ENCODE measurements at regions of chr18 and their contacts with region 1.

Region 1: GRCh38 chr18:72762515-72763122 is 105.2 kb downstream of the NETO1 start:
- DNase-seq: no peak
- ATAC-seq: no peak
- H3K4me3 ChIP-seq: no peak overlapping the region
- H3K27ac ChIP-seq: no peak overlapping the region
- H3K4me1 ChIP-seq: no peaks in the 10 kb centered on the region
- H3K27me3 ChIP-seq: no peaks in the 10 kb centered on the region
- CTCF ChIP-seq: peak; percentile 63 to 85 (median 76)
- POLR2A ChIP-seq: no peak

Region 2: DNA sequence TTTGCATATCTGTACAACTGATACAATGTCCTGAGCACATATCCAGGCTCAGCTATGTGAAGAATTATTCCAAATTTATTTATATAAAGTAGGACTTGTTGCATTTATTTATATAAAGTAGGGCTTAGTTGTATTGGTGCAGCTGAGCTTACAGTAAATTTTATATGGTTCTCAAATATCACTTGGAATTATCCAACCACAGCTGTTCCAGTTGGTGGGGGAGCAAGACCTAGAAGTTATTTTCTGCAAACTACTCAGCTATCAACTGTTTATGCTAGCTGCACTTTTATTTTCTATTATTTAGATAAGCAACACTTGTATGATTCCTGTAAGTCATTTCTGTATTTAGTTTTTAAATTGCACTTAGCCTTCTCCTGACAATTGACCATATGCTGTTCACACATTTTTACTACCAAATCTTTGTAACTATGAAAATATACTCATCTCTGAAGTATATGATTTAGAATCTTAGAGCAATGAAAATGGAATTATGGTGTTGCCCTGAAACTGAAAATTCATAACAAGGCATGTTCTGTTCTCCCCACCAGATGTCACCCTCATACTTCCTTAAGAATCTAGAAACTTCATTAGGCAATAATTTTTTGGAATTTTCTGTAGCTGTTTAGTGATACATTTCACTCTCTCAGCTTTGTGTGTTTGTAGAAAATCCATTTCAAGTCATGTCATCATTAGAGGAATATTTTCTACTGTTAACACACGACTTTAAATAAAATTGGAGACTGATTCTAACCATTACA is 61.5 kb before region 1 on chr18:
- intact Hi-C with region 1: no loop called
- DNase-seq: no peak
- ATAC-seq: no peak
- H3K4me3 ChIP-seq: no peak overlapping the region
- H3K27ac ChIP-seq: no peak overlapping the region
- H3K4me1 ChIP-seq: no peaks in the 10 kb centered on the region
- H3K27me3 ChIP-seq: no peaks in the 10 kb centered on the region
- CTCF ChIP-seq: peak in 11 of 12 donors; percentile 6 to 53 (median 28)
- POLR2A ChIP-seq: no peak

Region 3: GRCh38 chr18:72908181-72908580 is 145.6 kb after region 1 on chr18:
- intact Hi-C with region 1: no loop called
- DNase-seq: no peak
- ATAC-seq: no peak
- H3K4me3 ChIP-seq: no peak overlapping the region
- H3K27ac ChIP-seq: no peak overlapping the region
- H3K4me1 ChIP-seq: no peaks in the 10 kb centered on the region
- H3K27me3 ChIP-seq: no peaks in the 10 kb centered on the region
- CTCF ChIP-seq: no peak
- POLR2A ChIP-seq: no peak

Region 4: DNA sequence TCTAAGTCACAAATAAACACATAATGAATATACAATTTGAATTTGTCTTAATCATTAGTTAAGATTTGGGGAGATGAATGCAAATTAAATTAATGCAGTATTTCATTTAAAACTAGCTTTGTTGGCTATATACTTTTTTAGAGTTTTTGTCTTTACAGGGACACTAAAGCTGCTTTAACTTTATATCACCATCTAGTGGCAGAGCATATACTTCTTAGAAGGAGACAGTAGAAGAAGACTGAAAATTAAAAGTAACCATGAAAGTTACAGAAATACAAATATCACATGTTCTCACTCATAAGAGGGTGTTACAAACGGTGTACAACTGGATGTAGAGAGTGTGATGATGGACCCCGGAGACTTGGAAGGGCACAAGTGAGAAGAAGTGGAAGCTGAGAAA is 373.5 kb after region 1 on chr18:
- intact Hi-C with region 1: loop called in 8 of 10 experiments (anchors 2 to 10 kb)
- DNase-seq: no peak
- ATAC-seq: no peak
- H3K4me3 ChIP-seq: no peak overlapping the region
- H3K27ac ChIP-seq: no peak overlapping the region
- H3K4me1 ChIP-seq: no peaks in the 10 kb centered on the region
- H3K27me3 ChIP-seq: no peaks in the 10 kb centered on the region
- CTCF ChIP-seq: peak in 9 of 12 donors; percentile 16 to 48 (median 34)
- POLR2A ChIP-seq: no peak

Region 5: GRCh38 chr18:73842795-73843394 is 1080.3 kb after region 1 on chr18:
- intact Hi-C with region 1: loop called (anchors 2 to 10 kb)
- DNase-seq: peak in 3 of 5 donors; percentile 21 to 43 (median 41)
- ATAC-seq: peak in 2 of 4 donors; percentile 45 to 66
- H3K4me3 ChIP-seq: peak overlapping the region in 4 of 12 donors; percentile 5 to 25 (median 14)
- H3K27ac ChIP-seq: no peak overlapping the region
- H3K4me1 ChIP-seq: peaks cover 0 to 4% (median 0%) of the 10 kb centered on the region in 12 donors
- H3K27me3 ChIP-seq: peaks cover 0 to 9% (median 0%) of the 10 kb centered on the region in 9 donors
- CTCF ChIP-seq: peak; percentile 82 to 98 (median 94)
- POLR2A ChIP-seq: no peak

Region 6: GRCh38 chr18:74116633-74117554 is 1354.3 kb after region 1 on chr18:
- intact Hi-C with region 1: loop called (anchors 2 to 10 kb)
- DNase-seq: no peak
- ATAC-seq: peak in 2 of 4 donors; percentile 29 to 36
- H3K4me3 ChIP-seq: no peak overlapping the region
- H3K27ac ChIP-seq: no peak overlapping the region
- H3K4me1 ChIP-seq: peaks cover 0 to 6% (median 0%) of the 10 kb centered on the region in 12 donors
- H3K27me3 ChIP-seq: peaks cover 0 to 5% (median 0%) of the 10 kb centered on the region in 9 donors
- CTCF ChIP-seq: peak; percentile 41 to 68 (median 54)
- POLR2A ChIP-seq: no peak

Region 7: DNA sequence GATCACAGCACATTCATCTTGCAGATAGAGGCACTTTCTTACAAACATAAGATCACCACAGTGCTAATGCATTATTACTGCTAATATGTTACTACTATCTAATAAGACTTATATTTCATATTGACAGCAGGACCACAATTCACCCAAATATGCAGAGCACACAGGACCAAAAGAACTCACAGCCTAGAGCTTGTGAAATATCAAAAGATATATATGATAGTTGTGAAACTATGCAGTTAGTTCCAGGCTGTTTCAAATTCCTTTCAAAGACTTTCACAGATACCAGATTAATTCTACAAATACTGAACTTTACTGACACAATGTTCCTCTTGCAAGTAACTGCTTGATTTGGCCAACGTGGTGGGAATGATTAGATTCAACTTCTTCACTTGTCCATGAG is 1362.0 kb after region 1 on chr18:
- intact Hi-C with region 1: loop called in 9 of 10 experiments (anchors 5 to 10 kb)
- DNase-seq: no peak
- ATAC-seq: no peak
- H3K4me3 ChIP-seq: no peak overlapping the region
- H3K27ac ChIP-seq: no peak overlapping the region
- H3K4me1 ChIP-seq: peaks cover 0 to 8% (median 0%) of the 10 kb centered on the region in 12 donors
- H3K27me3 ChIP-seq: peaks cover 0 to 2% (median 0%) of the 10 kb centered on the region in 9 donors
- CTCF ChIP-seq: no peak
- POLR2A ChIP-seq: no peak

Region 8: DNA sequence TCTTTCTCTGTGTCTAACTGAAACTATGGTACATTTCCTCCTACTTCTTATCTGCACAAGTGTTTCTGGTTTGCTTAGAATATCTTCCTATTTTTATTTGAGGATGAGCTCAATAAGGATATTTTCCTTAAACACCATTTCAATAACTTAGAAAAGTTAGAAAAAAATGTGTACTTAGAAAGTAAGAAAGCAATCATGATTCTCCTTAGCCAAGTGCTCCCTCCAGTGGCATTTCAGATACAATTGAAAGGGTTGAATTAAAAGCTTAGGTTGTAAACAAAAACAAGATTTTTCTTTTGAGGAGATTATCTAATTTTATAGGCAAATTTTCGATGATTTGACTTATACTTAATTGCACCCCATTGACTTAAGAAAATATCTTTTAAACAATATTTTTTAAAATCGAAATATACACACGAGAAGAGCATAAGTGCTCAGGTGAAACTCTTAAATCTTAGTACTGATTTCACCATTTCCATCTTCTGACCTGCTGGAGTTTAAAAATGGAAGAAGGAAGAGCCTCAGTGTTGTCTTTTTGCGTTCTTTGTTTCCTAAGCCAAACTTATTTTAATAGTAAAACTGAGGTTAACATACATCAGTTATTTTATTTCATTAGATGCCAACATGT is 1579.9 kb after region 1 on chr18:
- intact Hi-C with region 1: loop called in 1 of 10 experiments (anchors 10 kb)
- DNase-seq: peak in 1 of 5 donors; percentile 32
- ATAC-seq: no peak
- H3K4me3 ChIP-seq: no peak overlapping the region
- H3K27ac ChIP-seq: no peak overlapping the region
- H3K4me1 ChIP-seq: no peaks in the 10 kb centered on the region
- H3K27me3 ChIP-seq: peaks cover 0 to 2% (median 0%) of the 10 kb centered on the region in 9 donors
- CTCF ChIP-seq: peak; percentile 66 to 88 (median 77)
- POLR2A ChIP-seq: no peak